ENCODE measurements at regions of chr2 and their contacts with region 1.

Region 1: GRCh38 chr2:68909793-68910674 is 38.8 kb upstream of the BMP10 start:
- DNase-seq: peak; percentile 65
- CTCF ChIP-seq: peak; percentile 93

Region 2: DNA sequence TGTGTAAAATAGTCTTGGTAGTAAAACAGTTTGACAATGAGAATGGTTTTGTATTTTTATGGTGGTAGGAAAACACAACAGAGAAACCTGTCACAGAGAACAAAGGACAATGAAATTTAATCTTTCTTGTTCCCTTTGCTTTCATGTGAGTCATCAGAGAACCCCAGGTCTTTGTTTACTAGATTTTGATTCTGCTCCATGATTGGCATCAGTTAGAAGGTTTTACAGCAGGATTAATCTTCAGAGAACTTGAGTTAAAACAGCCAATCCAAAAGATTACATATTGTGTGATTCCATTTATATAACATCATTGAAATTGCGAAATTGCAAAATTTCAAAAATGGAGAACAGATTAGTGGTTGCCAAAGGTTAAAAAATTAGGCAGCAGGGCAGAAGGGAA is 440.1 kb before region 1 on chr2:
- in situ Hi-C with region 1: loop called (anchors 10 kb)
- DNase-seq: no peak
- CTCF ChIP-seq: no peak

Region 3: GRCh38 chr2:68774569-68775271 is 135.3 kb before region 1 on chr2:
- in situ Hi-C with region 1: loop called (anchors 10 kb)
- DNase-seq: peak; percentile 67
- CTCF ChIP-seq: peak; percentile 5

Region 4: GRCh38 chr2:68849579-68850030 is 60.4 kb before region 1 on chr2:
- in situ Hi-C with region 1: loop called (anchors 10 kb)
- DNase-seq: no peak
- CTCF ChIP-seq: no peak

Region 5: DNA sequence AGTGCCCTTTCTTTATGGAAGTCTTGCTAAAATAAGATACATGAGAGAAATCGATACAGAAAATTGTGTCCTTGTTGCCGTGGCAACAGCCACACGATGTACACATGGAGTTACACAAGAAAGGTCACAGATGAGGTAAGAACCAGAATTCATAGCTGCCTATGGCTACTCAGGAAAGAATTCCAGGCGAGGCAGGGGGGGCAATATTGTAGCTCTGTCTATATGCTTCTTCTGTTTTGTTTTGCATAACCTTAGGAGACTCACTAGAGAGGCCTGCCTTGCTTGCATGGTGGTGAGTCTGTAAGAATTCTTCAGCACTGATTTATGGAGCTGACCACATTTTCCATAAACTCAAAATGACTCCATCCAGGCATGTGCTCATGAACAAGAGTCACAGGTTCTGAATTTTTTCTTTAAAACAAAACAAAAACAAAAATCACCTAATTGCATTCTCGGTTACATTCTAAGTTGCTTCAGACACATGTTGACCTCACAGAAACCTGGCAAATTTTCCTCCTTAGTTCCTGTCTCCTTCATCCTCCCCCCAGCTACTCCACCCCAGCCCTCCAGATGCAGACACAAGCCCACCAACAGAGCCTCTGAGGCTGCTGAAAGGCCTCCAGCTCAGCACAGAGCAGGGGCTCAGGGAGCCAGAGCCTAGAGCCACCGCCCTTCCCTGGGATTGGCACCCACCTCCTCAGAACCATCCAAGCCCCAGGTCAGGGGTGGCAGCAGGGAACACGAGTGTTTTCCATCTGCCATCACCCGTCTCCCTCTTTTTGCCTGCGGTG is 286.5 kb after region 1 on chr2:
- in situ Hi-C with region 1: no loop called
- DNase-seq: no peak
- CTCF ChIP-seq: no peak